Spleen (tissue), 13 donors: ENCODE measurements at regions of chr6 and their contacts with region 1.

Region 1: GRCh38 chr6:134822920-134823709 is 126.8 kb downstream of the ALDH8A1 start:
- DNase-seq: no peak
- H3K4me3 ChIP-seq: no peak overlapping the region
- H3K27ac ChIP-seq: no peak overlapping the region
- H3K4me1 ChIP-seq: peaks cover 0 to 4% (median 0%) of the 10 kb centered on the region in 6 donors
- H3K27me3 ChIP-seq: no peaks in the 10 kb centered on the region
- CTCF ChIP-seq: peak; percentile 49 to 95 (median 74)
- POLR2A ChIP-seq: no peak

Region 2: DNA sequence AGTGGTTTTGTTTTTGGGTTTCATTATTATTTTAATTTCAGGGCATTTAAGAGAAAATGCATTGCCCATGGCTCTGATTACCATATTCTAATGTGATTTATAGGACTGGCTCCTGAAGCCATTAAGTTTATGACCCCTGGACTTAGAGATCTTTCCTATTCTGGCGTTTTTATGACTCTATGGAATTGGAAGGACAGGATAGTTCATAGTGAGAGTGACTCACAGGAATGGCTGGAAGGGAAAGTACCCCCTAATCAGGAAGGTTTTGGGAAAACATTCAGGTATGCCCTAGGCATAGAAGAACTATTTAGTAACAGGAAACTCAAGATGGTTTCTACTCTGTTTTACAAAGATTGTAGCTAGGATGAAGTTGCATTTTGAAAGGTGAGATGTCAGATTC is 662.1 kb before region 1 on chr6:
- intact Hi-C with region 1: loop called (anchors 5 kb)
- DNase-seq: no peak
- H3K4me3 ChIP-seq: no peak overlapping the region
- H3K27ac ChIP-seq: no peak overlapping the region
- H3K4me1 ChIP-seq: no peaks in the 10 kb centered on the region
- H3K27me3 ChIP-seq: no peaks in the 10 kb centered on the region
- CTCF ChIP-seq: no peak
- POLR2A ChIP-seq: no peak

Region 3: DNA sequence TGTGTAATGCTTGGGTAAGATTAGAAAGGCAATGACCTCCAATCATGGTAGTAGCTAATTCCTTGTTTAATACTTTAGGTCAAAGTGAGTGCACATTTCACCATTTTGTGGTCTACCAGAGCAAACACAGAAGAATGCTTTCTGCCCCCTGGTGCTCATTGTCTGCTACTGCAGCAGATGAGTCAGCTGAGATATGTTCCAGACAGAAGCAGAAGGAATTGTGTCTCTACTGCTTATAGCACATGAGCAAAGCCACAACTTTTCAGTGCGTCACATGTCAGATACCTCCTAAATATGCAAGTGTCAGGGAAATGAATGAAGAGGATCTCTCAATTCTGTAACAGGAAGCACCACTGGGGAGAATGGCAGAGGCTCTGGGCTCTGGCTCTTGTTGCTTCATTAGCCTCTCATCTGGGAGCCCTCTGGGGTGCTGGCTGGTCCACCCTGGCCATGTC is 182.1 kb before region 1 on chr6:
- intact Hi-C with region 1: loop called (anchors 10 kb)
- DNase-seq: peak; percentile 83
- H3K4me3 ChIP-seq: no peak overlapping the region
- H3K27ac ChIP-seq: peak overlapping the region in 2 of 8 donors; percentile 8 to 24
- H3K4me1 ChIP-seq: peaks cover 0 to 26% (median 0%) of the 10 kb centered on the region in 6 donors
- H3K27me3 ChIP-seq: no peaks in the 10 kb centered on the region
- CTCF ChIP-seq: peak; percentile 92 to 99 (median 97)
- POLR2A ChIP-seq: no peak